ENCODE measurements at regions of chr19 and their contacts with region 1.

Region 1: DNA sequence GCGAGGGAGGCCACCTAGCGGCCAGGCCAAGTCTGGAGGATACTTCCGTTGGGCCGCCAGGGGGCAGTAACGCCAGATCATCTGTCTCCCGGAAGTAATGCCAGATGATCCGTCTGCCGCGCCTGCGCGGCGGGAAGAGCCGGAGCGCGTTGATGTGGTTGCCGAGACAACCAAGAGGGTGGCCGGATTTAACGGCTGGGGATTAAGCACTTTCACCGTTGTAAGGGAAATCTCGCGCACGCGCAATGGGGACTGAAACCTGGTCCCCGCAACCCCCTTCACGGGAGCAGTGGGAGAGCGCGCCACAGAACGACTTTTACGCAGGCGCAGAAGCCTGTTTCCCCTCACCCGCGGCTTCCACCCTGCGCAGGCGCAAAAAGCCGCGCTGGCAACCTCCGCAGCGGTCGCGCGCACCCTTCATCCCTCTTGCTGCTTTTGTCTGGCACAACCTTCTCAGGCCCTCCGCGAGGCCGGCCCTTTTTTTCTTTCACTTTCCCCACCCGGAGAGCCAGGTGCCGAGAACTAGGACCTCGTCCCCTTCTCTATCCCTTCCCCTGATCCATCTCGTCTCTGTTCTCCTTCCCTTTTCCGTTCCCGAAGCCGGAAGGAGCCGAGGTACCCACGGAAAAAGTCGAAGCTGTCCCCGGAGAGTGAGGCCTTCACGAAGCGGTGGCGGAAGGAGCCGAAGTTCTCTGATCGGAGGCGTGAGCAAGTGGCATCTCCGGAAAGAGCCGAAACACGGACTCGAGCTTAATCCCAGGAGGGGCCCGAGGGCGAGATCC is 886 bp upstream of the U2AF2 start:
- DNase-seq: peak; percentile 100
- H3K4me3 Mint-ChIP-seq: peak overlapping the region; percentile 93
- H3K27ac Mint-ChIP-seq: peak overlapping the region; percentile 100
- H3K4me1 Mint-ChIP-seq: peaks cover 28% of the 10 kb centered on the region
- H3K27me3 Mint-ChIP-seq: no peaks in the 10 kb centered on the region

Region 2: GRCh38 chr19:54189735-54190502 is 1464.0 kb before region 1 on chr19:
- CTCF ChIA-PET with region 1: no interaction called
- POLR2A ChIA-PET with region 1: no interaction called
- intact Hi-C with region 1: loop called (anchors 5 kb)
- DNase-seq: peak; percentile 100
- H3K4me3 Mint-ChIP-seq: peak overlapping the region; percentile 85
- H3K27ac Mint-ChIP-seq: peak overlapping the region; percentile 99
- H3K4me1 Mint-ChIP-seq: peaks cover 31% of the 10 kb centered on the region
- H3K27me3 Mint-ChIP-seq: no peaks in the 10 kb centered on the region

Region 3: GRCh38 chr19:55117636-55118391 is 536.1 kb before region 1 on chr19 and contains the start of gene PPP1R12C:
- CTCF ChIA-PET with region 1: no interaction called
- POLR2A ChIA-PET with region 1: no interaction called
- intact Hi-C with region 1: loop called (anchors 1 kb)
- DNase-seq: peak; percentile 99
- H3K4me3 Mint-ChIP-seq: peak within 1 kb of the TSS; percentile 97
- H3K27ac Mint-ChIP-seq: peak within 1 kb of the TSS; percentile 89
- H3K4me1 Mint-ChIP-seq: peaks cover 30% of the 10 kb centered on the region
- H3K27me3 Mint-ChIP-seq: peaks cover under 1% of the 10 kb centered on the region
- total RNA-seq, gene PPP1R12C: 62.7 to 73.2 TPM

Region 4: GRCh38 chr19:55484593-55485438 is 169.1 kb before region 1 on chr19 and contains the start of gene NAT14:
- CTCF ChIA-PET with region 1: no interaction called
- POLR2A ChIA-PET with region 1: no interaction called
- intact Hi-C with region 1: no loop called
- DNase-seq: peak; percentile 67
- H3K4me3 Mint-ChIP-seq: peak within 1 kb of the TSS; percentile 71
- H3K27ac Mint-ChIP-seq: no peak within 1 kb of the TSS
- H3K4me1 Mint-ChIP-seq: peaks cover 17% of the 10 kb centered on the region
- H3K27me3 Mint-ChIP-seq: no peaks in the 10 kb centered on the region
- total RNA-seq, gene NAT14: 8.5 to 12.9 TPM

Region 5: GRCh38 chr19:55599468-55600279 is 54.3 kb before region 1 on chr19 and contains the start of gene FIZ1:
- CTCF ChIA-PET with region 1: interaction called, 6 read pairs
- POLR2A ChIA-PET with region 1: interaction called, 10 read pairs
- intact Hi-C with region 1: loop called (anchors 1 kb)
- DNase-seq: peak; percentile 98
- H3K4me3 Mint-ChIP-seq: peak within 1 kb of the TSS; percentile 91
- H3K27ac Mint-ChIP-seq: peak within 1 kb of the TSS; percentile 95
- H3K4me1 Mint-ChIP-seq: peaks cover 25% of the 10 kb centered on the region
- H3K27me3 Mint-ChIP-seq: no peaks in the 10 kb centered on the region
- total RNA-seq, gene FIZ1: 13.8 to 13.9 TPM

Region 6: DNA sequence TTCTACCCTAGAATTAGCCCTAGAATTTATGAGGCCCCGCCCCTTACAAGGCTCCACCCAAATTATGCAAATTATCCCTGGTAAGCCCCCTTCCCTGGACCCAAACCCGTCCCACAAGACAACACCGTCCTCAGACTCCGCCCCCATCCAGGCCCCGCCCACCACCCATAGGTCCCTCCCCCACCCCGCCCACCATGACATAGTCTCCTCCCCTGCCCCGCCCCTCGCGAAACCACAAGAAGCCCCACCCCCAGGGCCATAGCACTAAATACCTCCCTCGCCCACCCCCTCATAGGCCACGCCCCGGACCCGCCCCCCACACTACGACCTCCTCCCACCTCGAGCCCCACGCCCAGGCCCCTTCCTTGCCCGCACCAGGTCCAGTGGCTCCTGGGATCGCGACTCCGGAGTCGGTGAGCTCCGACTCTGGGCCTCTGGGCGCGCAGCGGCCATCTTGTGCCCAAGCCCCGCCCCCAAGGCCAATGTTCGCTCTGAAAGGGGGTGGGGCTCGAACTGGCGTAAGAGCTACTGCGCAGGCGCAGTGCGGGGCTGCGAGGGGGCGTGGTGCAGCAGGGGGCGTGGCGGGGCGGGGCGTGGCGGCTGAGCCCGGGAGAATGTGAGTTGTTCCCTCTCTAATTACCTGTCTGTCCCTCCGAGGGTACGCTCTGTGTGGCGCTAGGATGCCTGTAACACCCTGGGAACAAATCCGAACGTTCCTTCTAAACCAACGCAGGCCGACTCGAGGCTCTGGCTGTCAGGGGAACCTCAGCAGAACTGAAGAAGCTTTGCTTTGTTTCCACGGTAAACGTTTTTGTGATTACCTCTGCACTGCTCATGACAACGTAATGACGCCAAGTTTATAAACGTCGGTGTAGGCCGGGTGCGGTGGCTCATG is 29.6 kb before region 1 on chr19 and contains the start of gene ZNF784:
- CTCF ChIA-PET with region 1: interaction called, 7 read pairs
- POLR2A ChIA-PET with region 1: interaction called, 6 read pairs
- intact Hi-C with region 1: loop called (anchors 1 kb)
- DNase-seq: peak; percentile 94
- H3K4me3 Mint-ChIP-seq: peak within 1 kb of the TSS; percentile 83
- H3K27ac Mint-ChIP-seq: peak within 1 kb of the TSS; percentile 94
- H3K4me1 Mint-ChIP-seq: peaks cover 46% of the 10 kb centered on the region
- H3K27me3 Mint-ChIP-seq: no peaks in the 10 kb centered on the region
- total RNA-seq, gene ZNF784: 3.9 to 4.4 TPM

Region 7: GRCh38 chr19:55643348-55644176 is 10.4 kb before region 1 on chr19 and contains the start of gene ZNF581:
- CTCF ChIA-PET with region 1: interaction called, 17 read pairs
- POLR2A ChIA-PET with region 1: interaction called, 19 read pairs
- intact Hi-C with region 1: loop called (anchors 1 kb)
- DNase-seq: peak; percentile 90
- H3K4me3 Mint-ChIP-seq: peak within 1 kb of the TSS; percentile 85
- H3K27ac Mint-ChIP-seq: peak within 1 kb of the TSS; percentile 98
- H3K4me1 Mint-ChIP-seq: peaks cover 46% of the 10 kb centered on the region
- H3K27me3 Mint-ChIP-seq: no peaks in the 10 kb centered on the region
- total RNA-seq, gene ZNF581: 19.2 to 20.1 TPM

Region 8: GRCh38 chr19:55838251-55838650 is 184.3 kb after region 1 on chr19:
- CTCF ChIA-PET with region 1: no interaction called
- POLR2A ChIA-PET with region 1: no interaction called
- intact Hi-C with region 1: no loop called
- DNase-seq: no peak
- H3K4me3 Mint-ChIP-seq: no peak overlapping the region
- H3K27ac Mint-ChIP-seq: no peak overlapping the region
- H3K4me1 Mint-ChIP-seq: no peaks in the 10 kb centered on the region
- H3K27me3 Mint-ChIP-seq: no peaks in the 10 kb centered on the region

Region 9: DNA sequence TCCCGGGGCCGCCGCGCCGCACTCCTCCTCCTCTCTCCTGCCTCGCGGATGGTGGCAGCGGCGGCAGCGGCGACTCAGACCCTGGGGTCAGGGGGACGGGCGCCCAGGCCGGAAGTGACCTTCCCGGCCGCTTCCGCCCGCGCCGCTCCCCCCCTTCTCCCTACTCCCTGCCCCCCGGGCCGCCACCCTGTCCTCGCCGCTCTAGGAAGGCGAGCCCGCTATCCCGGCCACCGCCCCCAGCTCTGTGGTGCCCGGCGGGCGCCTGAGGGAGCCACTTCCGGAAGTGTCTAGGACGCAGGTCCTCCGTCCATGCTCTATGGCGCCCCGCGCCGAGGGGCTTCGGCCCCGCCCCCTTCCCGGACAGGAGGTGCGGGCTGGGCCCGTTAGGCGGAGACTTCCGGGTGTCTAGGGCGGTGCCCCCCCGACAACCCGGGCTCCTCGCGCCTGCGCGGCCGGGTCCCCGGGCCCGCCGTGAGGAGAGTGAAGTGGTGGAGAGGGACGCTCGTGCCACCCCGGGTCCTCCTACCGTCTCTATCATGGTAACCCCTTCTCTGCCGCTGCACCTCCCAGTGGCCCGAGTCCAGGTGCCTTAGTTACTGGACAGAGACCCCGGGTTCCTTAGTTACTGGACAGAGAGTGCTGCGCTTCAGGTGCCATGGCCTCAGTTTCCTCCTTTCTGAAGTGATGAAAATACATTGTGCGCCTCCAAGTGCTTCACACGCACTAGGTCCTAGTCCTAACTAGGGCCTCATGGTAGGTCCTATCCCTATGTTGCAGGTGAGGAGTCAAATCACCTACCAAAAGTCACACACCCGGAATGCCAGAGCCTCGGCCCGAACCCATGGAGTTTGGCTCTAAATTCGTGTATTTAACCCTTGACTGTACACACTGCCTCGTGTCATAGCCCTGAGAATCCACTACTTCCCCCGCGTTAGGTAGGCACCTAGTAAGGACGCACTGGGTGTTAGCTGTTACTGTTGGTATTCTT is 467.5 kb after region 1 on chr19 and contains the start of gene ZNF787:
- CTCF ChIA-PET with region 1: no interaction called
- POLR2A ChIA-PET with region 1: no interaction called
- intact Hi-C with region 1: loop called (anchors 1 kb)
- DNase-seq: peak; percentile 97
- H3K4me3 Mint-ChIP-seq: peak within 1 kb of the TSS; percentile 85
- H3K27ac Mint-ChIP-seq: peak within 1 kb of the TSS; percentile 91
- H3K4me1 Mint-ChIP-seq: peaks cover 39% of the 10 kb centered on the region
- H3K27me3 Mint-ChIP-seq: no peaks in the 10 kb centered on the region
- total RNA-seq, gene ZNF787: 25.3 to 25.5 TPM